ENCODE measurements at regions of chr5 and their contacts with region 1.

Region 1: GRCh38 chr5:73170522-73170921 is 2.5 kb upstream of the TMEM174 start:
- DNase-seq: peak; percentile 42
- ATAC-seq: peak; percentile 49
- H3K4me3 Mint-ChIP-seq: no peak overlapping the region
- H3K27ac Mint-ChIP-seq: no peak overlapping the region
- H3K4me1 Mint-ChIP-seq: no peaks in the 10 kb centered on the region
- H3K27me3 Mint-ChIP-seq: peaks cover 82% of the 10 kb centered on the region
- CTCF ChIP-seq: peak; percentile 39

Region 2: DNA sequence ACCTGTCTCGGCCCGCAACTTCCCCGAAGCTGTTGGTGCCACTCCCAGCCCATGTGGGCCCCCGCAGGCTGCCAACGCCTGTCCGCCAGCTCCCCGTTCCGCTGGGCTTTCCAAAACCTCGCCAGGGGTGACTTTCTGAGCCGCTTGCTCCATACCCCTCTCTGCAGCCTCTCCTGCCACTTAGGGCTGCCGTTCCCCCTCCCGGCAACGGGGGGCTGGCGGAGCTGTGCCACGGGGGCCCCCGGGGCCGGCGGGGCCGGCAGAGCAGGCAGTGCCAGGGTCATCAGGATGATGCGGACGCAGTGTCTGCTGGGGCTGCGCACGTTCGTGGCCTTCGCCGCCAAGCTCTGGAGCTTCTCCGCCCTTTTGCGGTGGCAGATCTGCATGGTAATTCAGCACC is 173.9 kb before region 1 on chr5:
- CTCF ChIA-PET with region 1: no interaction called
- POLR2A ChIA-PET with region 1: no interaction called
- intact Hi-C with region 1: no loop called
- DNase-seq: no peak
- ATAC-seq: no peak
- H3K4me3 Mint-ChIP-seq: no peak overlapping the region
- H3K27ac Mint-ChIP-seq: no peak overlapping the region
- H3K4me1 Mint-ChIP-seq: no peaks in the 10 kb centered on the region
- H3K27me3 Mint-ChIP-seq: peaks cover 4% of the 10 kb centered on the region
- CTCF ChIP-seq: no peak

Region 3: DNA sequence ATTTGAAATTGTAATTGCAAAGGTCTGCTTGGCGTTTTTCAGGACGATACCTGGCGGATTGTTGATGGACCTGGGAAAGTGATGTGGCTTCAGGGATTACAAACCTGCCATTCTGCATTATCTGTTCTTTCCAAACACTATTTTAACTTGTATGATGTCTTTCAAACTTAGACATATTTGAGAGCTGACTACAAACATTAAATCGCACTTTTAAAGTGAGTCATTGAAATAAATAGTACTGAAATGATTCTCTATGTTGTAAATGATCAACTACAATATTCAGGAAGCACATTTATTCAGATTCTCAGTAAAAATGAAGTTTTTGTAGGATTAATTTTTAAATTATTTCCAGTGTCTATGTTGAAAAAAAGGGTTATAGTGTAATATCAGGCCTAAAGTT is 82.5 kb before region 1 on chr5:
- CTCF ChIA-PET with region 1: interaction called, 15 read pairs
- POLR2A ChIA-PET with region 1: no interaction called
- intact Hi-C with region 1: no loop called
- DNase-seq: no peak
- ATAC-seq: no peak
- H3K4me3 Mint-ChIP-seq: no peak overlapping the region
- H3K27ac Mint-ChIP-seq: no peak overlapping the region
- H3K4me1 Mint-ChIP-seq: no peaks in the 10 kb centered on the region
- H3K27me3 Mint-ChIP-seq: peaks cover 21% of the 10 kb centered on the region
- CTCF ChIP-seq: no peak

Region 4: GRCh38 chr5:73160239-73160671 is 10.3 kb before region 1 on chr5:
- CTCF ChIA-PET with region 1: interaction called, 12 read pairs
- POLR2A ChIA-PET with region 1: no interaction called
- intact Hi-C with region 1: no loop called
- DNase-seq: peak; percentile 91
- ATAC-seq: peak; percentile 82
- H3K4me3 Mint-ChIP-seq: peak overlapping the region; percentile 18
- H3K27ac Mint-ChIP-seq: peak overlapping the region; percentile 25
- H3K4me1 Mint-ChIP-seq: peaks cover 30% of the 10 kb centered on the region
- H3K27me3 Mint-ChIP-seq: peaks cover 65% of the 10 kb centered on the region
- CTCF ChIP-seq: no peak

Measured in activated CD8-positive, alpha-beta T cell treated with anti-CD3 and anti-CD28 coated beads for 36 hours (primary cell).